ENCODE measurements at regions of chr3 and their contacts with region 1.

Region 1: GRCh38 chr3:136861890-136862616 is at the start of gene NCK1:
- DNase-seq: peak; percentile 99
- H3K4me3 Mint-ChIP-seq: peak within 1 kb of the TSS; percentile 94
- H3K27ac Mint-ChIP-seq: peak within 1 kb of the TSS; percentile 95
- H3K4me1 Mint-ChIP-seq: peaks cover 32% of the 10 kb centered on the region
- H3K27me3 Mint-ChIP-seq: no peaks in the 10 kb centered on the region
- total RNA-seq, gene NCK1: 32.3 to 38.0 TPM

Region 2: GRCh38 chr3:136196401-136197158 is 665.5 kb before region 1 on chr3:
- CTCF ChIA-PET with region 1: no interaction called
- POLR2A ChIA-PET with region 1: interaction called, 7 read pairs
- intact Hi-C with region 1: loop called (anchors 1 kb)
- DNase-seq: peak; percentile 100
- H3K4me3 Mint-ChIP-seq: peak overlapping the region; percentile 95
- H3K27ac Mint-ChIP-seq: peak overlapping the region; percentile 99
- H3K4me1 Mint-ChIP-seq: peaks cover 18% of the 10 kb centered on the region
- H3K27me3 Mint-ChIP-seq: peaks cover 5% of the 10 kb centered on the region

Region 3: DNA sequence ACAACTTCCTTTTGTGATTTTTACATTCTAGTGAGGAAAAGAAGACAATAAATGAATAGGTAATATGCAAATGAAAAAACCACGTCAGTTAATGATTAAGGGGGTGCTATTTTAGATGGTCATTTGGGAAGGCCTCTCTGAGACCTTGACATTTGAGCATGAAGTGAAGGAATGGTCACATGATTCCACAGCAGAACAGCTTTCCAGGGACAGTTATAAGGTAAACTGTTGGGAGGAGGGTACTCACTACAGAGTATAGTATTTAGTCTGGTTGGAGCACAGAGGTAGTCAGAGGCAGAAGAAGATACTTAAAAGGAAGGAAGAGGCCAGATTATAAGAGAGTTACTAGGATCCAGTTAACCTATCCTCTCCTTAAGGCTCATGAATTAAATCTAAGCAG is 356.4 kb before region 1 on chr3:
- CTCF ChIA-PET with region 1: no interaction called
- POLR2A ChIA-PET with region 1: no interaction called
- intact Hi-C with region 1: no loop called
- DNase-seq: no peak
- H3K4me3 Mint-ChIP-seq: no peak overlapping the region
- H3K27ac Mint-ChIP-seq: no peak overlapping the region
- H3K4me1 Mint-ChIP-seq: no peaks in the 10 kb centered on the region
- H3K27me3 Mint-ChIP-seq: no peaks in the 10 kb centered on the region

Region 4: GRCh38 chr3:136818769-136819391 is 43.2 kb before region 1 on chr3 and contains the start of gene SLC35G2:
- CTCF ChIA-PET with region 1: no interaction called
- POLR2A ChIA-PET with region 1: no interaction called
- intact Hi-C with region 1: loop called (anchors 1 kb)
- DNase-seq: peak; percentile 50
- H3K4me3 Mint-ChIP-seq: peak within 1 kb of the TSS; percentile 78
- H3K27ac Mint-ChIP-seq: no peak within 1 kb of the TSS
- H3K4me1 Mint-ChIP-seq: peaks cover 19% of the 10 kb centered on the region
- H3K27me3 Mint-ChIP-seq: peaks cover 34% of the 10 kb centered on the region
- total RNA-seq, gene SLC35G2: 2.1 to 2.9 TPM

Region 5: GRCh38 chr3:136882572-136882971 is 20.5 kb after region 1 on chr3:
- CTCF ChIA-PET with region 1: interaction called, 4 read pairs
- POLR2A ChIA-PET with region 1: interaction called, 6 read pairs
- intact Hi-C with region 1: loop called (anchors 1 kb)
- DNase-seq: no peak
- H3K4me3 Mint-ChIP-seq: no peak overlapping the region
- H3K27ac Mint-ChIP-seq: no peak overlapping the region
- H3K4me1 Mint-ChIP-seq: peaks cover 53% of the 10 kb centered on the region
- H3K27me3 Mint-ChIP-seq: no peaks in the 10 kb centered on the region

Region 6: DNA sequence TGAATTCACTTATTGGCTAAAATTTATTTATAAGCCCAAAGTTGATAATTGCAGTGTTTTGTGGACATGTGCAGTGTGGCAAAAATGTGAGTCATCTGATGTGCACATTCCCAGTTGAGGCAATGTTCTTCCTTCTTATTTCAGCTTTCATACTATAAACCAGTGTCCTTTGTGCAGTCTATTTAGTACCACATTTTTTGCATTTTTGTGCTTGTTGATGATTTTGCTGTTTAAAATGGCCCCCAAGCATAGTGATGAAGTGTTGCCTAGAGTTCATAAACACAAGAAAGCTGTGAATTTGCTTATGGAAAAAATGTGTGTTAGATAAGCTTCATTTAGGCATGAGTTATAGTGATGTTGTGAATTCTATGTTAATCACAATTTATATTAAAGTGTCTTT is 76.3 kb after region 1 on chr3:
- CTCF ChIA-PET with region 1: no interaction called
- POLR2A ChIA-PET with region 1: interaction called, 5 read pairs
- intact Hi-C with region 1: loop called (anchors 5 kb)
- DNase-seq: no peak
- H3K4me3 Mint-ChIP-seq: no peak overlapping the region
- H3K27ac Mint-ChIP-seq: no peak overlapping the region
- H3K4me1 Mint-ChIP-seq: peaks cover 55% of the 10 kb centered on the region
- H3K27me3 Mint-ChIP-seq: no peaks in the 10 kb centered on the region